Psoas muscle (tissue), 8 donors: ENCODE measurements at regions of chr3 and their contacts with region 1.

Region 1: GRCh38 chr3:132343018-132343612 is 25.9 kb downstream of the ACP3 start:
- DNase-seq: no peak
- ATAC-seq: peak in 2 of 4 donors; percentile 59 to 71
- H3K4me3 ChIP-seq: no peak overlapping the region
- H3K27ac ChIP-seq: no peak overlapping the region
- H3K4me1 ChIP-seq: peaks cover 8% of the 10 kb centered on the region
- H3K27me3 ChIP-seq: no peaks in the 10 kb centered on the region
- CTCF ChIP-seq: peak; percentile 72

Region 2: GRCh38 chr3:132034486-132035464 is 308.3 kb before region 1 on chr3 and contains the start of gene CPNE4:
- intact Hi-C with region 1: loop called (anchors 10 kb)
- DNase-seq: peak; percentile 75 to 80
- ATAC-seq: peak in 3 of 4 donors; percentile 65 to 76 (median 74)
- H3K4me3 ChIP-seq: peak within 1 kb of the TSS; percentile 2
- H3K27ac ChIP-seq: no peak within 1 kb of the TSS
- H3K4me1 ChIP-seq: no peaks in the 10 kb centered on the region
- H3K27me3 ChIP-seq: peaks cover 12 to 64% (median 15%) of the 10 kb centered on the region in 3 donors
- CTCF ChIP-seq: peak; percentile 47
- total RNA-seq, gene CPNE4: not detected

Region 3: GRCh38 chr3:132595014-132595413 is 251.9 kb after region 1 on chr3:
- intact Hi-C with region 1: no loop called
- DNase-seq: no peak
- ATAC-seq: no peak
- H3K4me3 ChIP-seq: no peak overlapping the region
- H3K27ac ChIP-seq: no peak overlapping the region
- H3K4me1 ChIP-seq: no peaks in the 10 kb centered on the region
- H3K27me3 ChIP-seq: no peaks in the 10 kb centered on the region
- CTCF ChIP-seq: no peak

Region 4: GRCh38 chr3:132629928-132630327 is 286.8 kb after region 1 on chr3:
- intact Hi-C with region 1: no loop called
- DNase-seq: no peak
- ATAC-seq: no peak
- H3K4me3 ChIP-seq: no peak overlapping the region
- H3K27ac ChIP-seq: no peak overlapping the region
- H3K4me1 ChIP-seq: no peaks in the 10 kb centered on the region
- H3K27me3 ChIP-seq: no peaks in the 10 kb centered on the region
- CTCF ChIP-seq: no peak